ENCODE measurements at regions of chr3 and their contacts with region 1.

Region 1: GRCh38 chr3:181210275-181210674 is 220.7 kb upstream of the DNAJC19 start:
- DNase-seq: peak; percentile 8
- H3K4me3 ChIP-seq: no peak overlapping the region
- H3K27ac ChIP-seq: no peak overlapping the region
- H3K4me1 ChIP-seq: no peaks in the 10 kb centered on the region; a peak in 1 of 4 replicates
- H3K27me3 ChIP-seq: no peaks in the 10 kb centered on the region
- CTCF ChIP-seq: peak; percentile 60
- EP300 ChIP-seq: no peak
- RAD21 ChIP-seq: peak; percentile 80

Region 2: DNA sequence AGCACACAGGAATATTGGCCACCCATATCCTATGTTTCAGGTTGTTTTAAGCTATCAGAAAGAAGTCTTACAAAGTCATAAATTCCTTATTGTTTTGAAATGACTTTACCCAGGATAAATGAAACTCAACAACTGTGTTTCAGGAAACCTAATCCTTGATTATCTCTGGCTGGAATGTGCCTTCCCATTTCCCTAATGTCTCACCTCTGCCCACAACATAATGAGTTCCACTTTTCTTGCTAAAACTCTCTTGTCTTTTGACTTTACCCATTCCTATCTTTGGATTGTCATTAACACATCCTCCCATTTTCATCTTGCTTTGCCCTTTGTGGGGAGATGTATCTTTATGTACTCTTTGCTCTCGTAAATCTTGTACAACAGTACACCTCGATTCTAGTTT is 20.7 kb before region 1 on chr3:
- CTCF ChIA-PET with region 1: interaction called, 16 read pairs
- POLR2A ChIA-PET with region 1: no interaction called
- DNase-seq: no peak
- H3K4me3 ChIP-seq: no peak overlapping the region
- H3K27ac ChIP-seq: no peak overlapping the region
- H3K4me1 ChIP-seq: no peaks in the 10 kb centered on the region
- H3K27me3 ChIP-seq: no peaks in the 10 kb centered on the region
- CTCF ChIP-seq: no peak
- EP300 ChIP-seq: no peak
- RAD21 ChIP-seq: no peak

Region 3: DNA sequence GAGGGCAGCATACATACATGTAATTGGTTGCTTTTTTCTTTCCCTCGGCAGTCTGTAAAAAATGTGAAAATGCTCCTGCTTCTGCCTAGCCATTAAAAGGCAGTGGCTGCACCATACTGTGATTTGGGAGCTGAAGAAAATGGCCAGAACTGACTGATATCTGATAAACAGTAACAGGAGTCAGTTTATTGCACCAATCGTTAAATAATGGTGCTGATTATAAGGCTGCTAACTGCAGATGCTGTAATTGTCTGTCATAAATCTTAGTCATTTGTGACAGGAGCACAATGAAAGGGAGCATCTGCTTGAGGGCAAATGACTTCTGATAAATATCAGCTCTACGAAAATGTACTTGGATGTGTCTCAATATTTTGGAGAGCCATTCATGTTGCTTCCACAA is 42.4 kb after region 1 on chr3:
- CTCF ChIA-PET with region 1: interaction called, 18 read pairs
- POLR2A ChIA-PET with region 1: no interaction called
- DNase-seq: peak; percentile 68
- H3K4me3 ChIP-seq: no peak overlapping the region
- H3K27ac ChIP-seq: peak overlapping the region in 1 of 2 experiments; percentile 96; a peak in 2 of 4 replicates
- H3K4me1 ChIP-seq: peaks cover 0 to 13% of the 10 kb centered on the region in 2 experiments; a peak in 2 of 4 replicates
- H3K27me3 ChIP-seq: no peaks in the 10 kb centered on the region
- CTCF ChIP-seq: no peak
- EP300 ChIP-seq: peak in 1 of 2 experiments; percentile 98; a peak in 2 of 4 replicates
- RAD21 ChIP-seq: peak; percentile 26

Region 4: GRCh38 chr3:181326637-181327223 is 116.5 kb after region 1 on chr3:
- CTCF ChIA-PET with region 1: interaction called, 14 read pairs
- POLR2A ChIA-PET with region 1: no interaction called
- DNase-seq: no peak
- H3K4me3 ChIP-seq: no peak overlapping the region
- H3K27ac ChIP-seq: no peak overlapping the region
- H3K4me1 ChIP-seq: peaks cover 0 to 10% of the 10 kb centered on the region in 2 experiments; a peak in 2 of 4 replicates
- H3K27me3 ChIP-seq: no peaks in the 10 kb centered on the region
- CTCF ChIP-seq: peak; percentile 80
- EP300 ChIP-seq: no peak
- RAD21 ChIP-seq: peak; percentile 75

Region 5: GRCh38 chr3:181709537-181710279 is 499.4 kb after region 1 on chr3:
- CTCF ChIA-PET with region 1: interaction called, 10 read pairs
- POLR2A ChIA-PET with region 1: no interaction called
- DNase-seq: peak; percentile 72
- H3K4me3 ChIP-seq: peak overlapping the region in 1 of 2 experiments; percentile 37; a peak in 1 of 4 replicates
- H3K27ac ChIP-seq: no peak overlapping the region
- H3K4me1 ChIP-seq: peaks cover 0 to 13% of the 10 kb centered on the region in 2 experiments; a peak in 1 of 4 replicates
- H3K27me3 ChIP-seq: peaks cover 14% of the 10 kb centered on the region; the same call in 1 of the 2 replicates
- CTCF ChIP-seq: peak; percentile 90
- EP300 ChIP-seq: no peak
- RAD21 ChIP-seq: peak; percentile 88